Aorta (tissue), 5 donors: ENCODE measurements at regions of chr11 and their contacts with region 1.

Region 1: DNA sequence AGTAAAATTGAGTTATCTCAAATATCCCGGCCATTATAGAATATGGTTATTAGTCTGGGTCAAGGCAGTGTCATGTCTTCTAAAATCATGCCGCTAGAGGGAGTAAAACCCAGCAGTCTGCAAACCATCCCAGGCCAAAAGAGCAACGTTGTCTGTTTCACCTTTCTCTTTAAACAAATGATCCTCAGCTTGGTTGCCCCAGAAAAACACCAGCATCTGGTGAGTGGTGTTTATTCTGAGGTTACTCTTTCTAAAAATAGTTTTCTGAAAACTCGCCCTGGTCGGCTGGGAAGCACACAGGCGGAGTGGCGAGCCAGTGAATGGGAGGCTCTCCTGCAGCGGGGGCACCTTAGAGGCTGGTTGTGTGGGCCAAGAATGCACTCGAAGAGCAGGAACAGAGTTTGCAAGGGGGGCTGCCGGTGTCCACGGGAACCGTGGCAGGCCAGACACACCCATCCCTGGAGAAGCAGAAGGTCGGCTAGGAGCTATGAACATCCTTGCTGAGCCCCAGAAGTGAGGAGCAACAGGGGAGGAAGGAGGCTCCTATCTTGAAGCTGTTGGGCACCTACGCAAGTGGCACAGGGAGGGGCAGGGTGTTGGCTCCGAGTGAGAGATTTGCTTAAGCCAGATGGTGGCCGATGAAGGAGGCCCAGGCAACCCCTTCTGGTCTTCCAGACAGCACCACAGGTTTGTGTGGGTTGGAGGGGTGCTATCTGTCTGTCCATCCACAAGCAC is 297.1 kb downstream of the ETS1 start:
- DNase-seq: peak; percentile 51 to 76
- ATAC-seq: peak; percentile 83
- H3K4me3 ChIP-seq: no peak overlapping the region
- H3K27ac ChIP-seq: no peak overlapping the region
- H3K4me1 ChIP-seq: peaks cover 0 to 10% of the 10 kb centered on the region in 2 donors
- H3K27me3 ChIP-seq: no peaks in the 10 kb centered on the region

Region 2: GRCh38 chr11:128021349-128022006 is 268.8 kb before region 1 on chr11:
- intact Hi-C with region 1: loop called in 1 of 2 experiments (anchors 10 kb)
- DNase-seq: no peak
- ATAC-seq: no peak
- H3K4me3 ChIP-seq: no peak overlapping the region
- H3K27ac ChIP-seq: no peak overlapping the region
- H3K4me1 ChIP-seq: no peaks in the 10 kb centered on the region
- H3K27me3 ChIP-seq: no peaks in the 10 kb centered on the region

Region 3: DNA sequence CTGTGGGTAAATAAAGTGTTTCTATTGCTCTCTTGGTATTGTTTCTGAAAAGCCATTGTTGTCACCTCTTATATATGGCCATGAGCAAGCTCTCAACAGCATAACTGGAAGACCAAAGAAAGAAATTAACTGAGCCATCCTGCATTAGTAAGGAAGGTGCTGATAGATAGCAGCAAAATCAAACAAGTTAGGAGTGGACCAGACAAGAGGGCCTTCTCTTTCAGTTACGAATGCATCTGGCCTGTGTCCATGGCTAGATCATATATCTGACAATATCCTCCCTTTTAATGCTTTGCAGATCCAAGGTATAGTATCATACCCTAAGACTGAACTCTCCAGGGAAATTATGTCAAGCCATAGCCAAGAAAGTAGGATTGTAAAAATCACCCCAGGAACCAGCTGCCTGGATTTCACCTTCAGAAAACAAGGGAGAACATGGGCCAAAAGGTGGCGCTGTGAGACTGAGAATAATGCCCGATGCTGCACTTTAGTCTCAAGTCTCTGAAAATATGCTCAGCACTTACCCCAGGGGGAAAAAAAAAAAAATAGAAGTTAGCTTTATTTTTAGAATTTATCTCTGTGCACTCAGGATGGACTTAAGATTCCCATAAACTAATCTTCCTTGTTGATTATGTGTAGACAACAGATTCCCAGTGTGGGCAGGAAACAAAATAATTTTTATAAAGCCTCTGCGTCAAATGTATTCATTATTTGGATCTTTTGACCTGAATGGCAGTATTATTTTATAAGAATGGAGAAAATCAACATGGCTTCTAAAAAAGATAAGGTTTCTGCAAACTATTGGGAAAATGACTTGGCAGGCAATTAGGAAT is 118.0 kb before region 1 on chr11:
- intact Hi-C with region 1: loop called (anchors 5 to 10 kb)
- DNase-seq: peak; percentile 84 to 91
- ATAC-seq: peak; percentile 83
- H3K4me3 ChIP-seq: no peak overlapping the region
- H3K27ac ChIP-seq: no peak overlapping the region
- H3K4me1 ChIP-seq: no peaks in the 10 kb centered on the region
- H3K27me3 ChIP-seq: peaks cover 0 to 2% of the 10 kb centered on the region in 2 donors

Region 4: GRCh38 chr11:128210148-128210940 is 79.9 kb before region 1 on chr11:
- intact Hi-C with region 1: no loop called
- DNase-seq: no peak
- ATAC-seq: peak; percentile 30
- H3K4me3 ChIP-seq: no peak overlapping the region
- H3K27ac ChIP-seq: peak overlapping the region in 1 of 2 donors; percentile 44
- H3K4me1 ChIP-seq: peaks cover 3% of the 10 kb centered on the region in 2 donors
- H3K27me3 ChIP-seq: no peaks in the 10 kb centered on the region

Region 5: DNA sequence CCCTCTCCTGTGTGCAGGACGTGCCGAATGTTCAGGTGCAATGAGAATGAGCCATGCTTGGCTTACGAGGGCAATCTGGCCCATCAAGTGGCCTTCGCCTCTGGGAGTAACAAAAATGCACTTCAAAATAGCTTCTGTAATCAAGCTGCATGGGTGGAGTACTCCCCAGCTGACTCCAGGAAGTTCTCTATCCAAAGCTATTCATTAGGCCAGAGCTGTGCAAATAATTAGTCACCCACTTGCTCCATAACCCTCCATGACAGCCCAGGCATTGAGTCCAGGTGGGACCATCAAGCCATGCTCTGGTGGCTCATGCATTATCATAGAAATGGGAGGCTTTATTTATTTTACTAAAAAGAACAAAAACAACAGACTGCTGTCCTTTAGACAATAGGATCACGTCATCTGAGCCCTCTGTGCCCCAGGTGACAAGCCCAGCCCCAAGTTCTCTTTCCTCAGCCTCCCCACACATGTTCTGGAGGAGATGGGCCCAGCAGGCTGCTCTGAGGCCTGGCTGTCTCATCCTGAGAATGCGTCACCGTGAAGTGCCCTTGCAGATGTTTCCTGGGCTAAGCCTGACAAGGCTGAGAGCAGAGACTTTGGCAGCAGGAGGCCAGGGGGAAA is 52.4 kb after region 1 on chr11:
- intact Hi-C with region 1: no loop called
- DNase-seq: no peak
- ATAC-seq: peak; percentile 60
- H3K4me3 ChIP-seq: no peak overlapping the region
- H3K27ac ChIP-seq: no peak overlapping the region
- H3K4me1 ChIP-seq: no peaks in the 10 kb centered on the region
- H3K27me3 ChIP-seq: no peaks in the 10 kb centered on the region

Region 6: DNA sequence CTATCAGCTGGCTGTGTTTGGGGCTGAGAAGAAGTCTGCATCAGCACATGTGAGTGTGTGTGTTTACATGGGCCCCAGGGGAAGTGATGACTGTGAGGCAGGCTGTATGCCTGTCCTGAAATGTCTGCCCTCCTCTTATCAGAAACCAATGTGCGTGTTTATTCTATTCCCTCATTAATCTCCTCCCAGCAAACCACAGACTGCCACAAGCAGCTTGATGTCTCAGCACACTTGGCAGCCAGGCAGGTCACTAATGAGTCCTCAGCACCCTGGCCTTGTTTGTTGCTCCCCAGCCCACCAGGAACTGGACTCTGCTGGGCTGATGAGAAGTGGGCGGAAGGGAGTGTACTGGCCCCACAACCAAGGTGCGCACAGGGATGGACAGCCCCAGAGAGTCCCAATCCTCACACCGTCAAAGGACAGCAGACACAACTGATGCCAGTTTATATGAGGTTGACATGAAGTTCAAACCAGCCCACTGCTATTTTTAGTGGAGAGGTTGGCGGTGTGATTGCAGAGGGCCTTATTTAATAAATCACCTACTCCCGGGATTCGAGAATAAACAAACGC is 71.3 kb after region 1 on chr11:
- intact Hi-C with region 1: no loop called
- DNase-seq: no peak
- ATAC-seq: no peak
- H3K4me3 ChIP-seq: no peak overlapping the region
- H3K27ac ChIP-seq: no peak overlapping the region
- H3K4me1 ChIP-seq: peaks cover 0 to 5% of the 10 kb centered on the region in 2 donors
- H3K27me3 ChIP-seq: no peaks in the 10 kb centered on the region

Region 7: GRCh38 chr11:128467610-128468041 is 177.4 kb after region 1 on chr11:
- intact Hi-C with region 1: loop called in 1 of 2 experiments (anchors 5 kb)
- DNase-seq: peak; percentile 77 to 83
- ATAC-seq: peak; percentile 81
- H3K4me3 ChIP-seq: no peak overlapping the region
- H3K27ac ChIP-seq: peak overlapping the region in 1 of 2 donors; percentile 70
- H3K4me1 ChIP-seq: peaks cover 3 to 14% of the 10 kb centered on the region in 2 donors
- H3K27me3 ChIP-seq: no peaks in the 10 kb centered on the region

Region 8: GRCh38 chr11:128548655-128549255 is 258.5 kb after region 1 on chr11:
- intact Hi-C with region 1: loop called in 1 of 2 experiments (anchors 10 kb)
- DNase-seq: peak; percentile 62 to 85
- ATAC-seq: peak; percentile 82
- H3K4me3 ChIP-seq: peak overlapping the region; percentile 39 to 73
- H3K27ac ChIP-seq: no peak overlapping the region
- H3K4me1 ChIP-seq: no peaks in the 10 kb centered on the region
- H3K27me3 ChIP-seq: no peaks in the 10 kb centered on the region

Region 9: GRCh38 chr11:128824191-128825049 is 534.1 kb after region 1 on chr11:
- intact Hi-C with region 1: loop called in 1 of 2 experiments (anchors 5 kb)
- DNase-seq: peak in 1 of 2 donors; percentile 49
- ATAC-seq: peak; percentile 75
- H3K4me3 ChIP-seq: no peak overlapping the region
- H3K27ac ChIP-seq: no peak overlapping the region
- H3K4me1 ChIP-seq: no peaks in the 10 kb centered on the region
- H3K27me3 ChIP-seq: no peaks in the 10 kb centered on the region